Caco-2 (cell line): ENCODE measurements at regions of chr19 and their contacts with region 1.

Region 1: DNA sequence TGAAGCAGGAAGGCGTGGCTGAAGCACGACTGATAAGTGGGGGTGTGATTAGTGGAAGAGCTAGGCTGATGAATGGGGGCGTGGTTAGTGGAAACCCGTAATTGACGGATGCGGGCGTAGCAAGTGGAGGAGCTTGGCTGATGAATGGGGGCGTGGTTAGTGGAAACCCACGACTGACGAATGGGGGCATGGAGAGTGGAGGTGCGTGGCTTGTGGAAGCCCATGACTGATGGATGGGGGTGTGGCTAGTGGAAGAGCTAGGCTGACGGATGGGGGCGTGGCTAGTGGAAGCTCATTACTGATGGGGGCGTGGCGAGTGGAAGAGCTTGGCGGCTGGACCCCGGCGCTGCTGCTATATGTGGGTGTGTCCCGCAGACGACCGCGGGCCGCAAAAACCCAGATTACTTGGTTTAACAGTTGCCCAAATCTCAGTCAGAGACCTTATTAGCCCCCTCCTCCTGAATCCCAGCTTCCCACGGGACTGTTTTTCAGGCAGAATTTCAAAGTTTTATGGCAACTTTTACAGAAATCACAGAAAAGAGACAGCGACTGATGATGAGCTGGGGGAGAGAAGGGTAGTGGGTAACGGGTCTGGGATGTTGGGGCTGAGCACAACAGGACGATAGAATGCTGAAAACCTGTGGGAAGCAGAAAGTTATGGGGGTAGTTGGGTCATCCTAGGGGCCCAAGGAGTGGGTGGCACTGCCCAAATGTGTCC is 9.0 kb upstream of the MEIS3 start:
- DNase-seq: peak; percentile 92 to 98
- H3K4me3 ChIP-seq: peak overlapping the region; percentile 13; the same call in 1 of the 2 replicates
- H3K4me3 Mint-ChIP-seq: no peak overlapping the region
- H3K27ac Mint-ChIP-seq: no peak overlapping the region
- H3K4me1 ChIP-seq: peaks cover 13% of the 10 kb centered on the region
- H3K4me1 Mint-ChIP-seq: no peaks in the 10 kb centered on the region
- H3K27me3 ChIP-seq: peaks cover 3% of the 10 kb centered on the region
- H3K27me3 Mint-ChIP-seq: peaks cover 4% of the 10 kb centered on the region
- CTCF ChIP-seq: no peak

Region 2: GRCh38 chr19:47284324-47284899 is 143.9 kb before region 1 on chr19:
- CTCF ChIA-PET with region 1: interaction called, 5 read pairs
- POLR2A ChIA-PET with region 1: no interaction called
- intact Hi-C with region 1: loop called (anchors 5 kb)
- DNase-seq: peak in 1 of 2 experiments; percentile 78
- H3K4me3 ChIP-seq: no peak overlapping the region
- H3K4me3 Mint-ChIP-seq: no peak overlapping the region
- H3K27ac Mint-ChIP-seq: no peak overlapping the region
- H3K4me1 ChIP-seq: peaks cover 10% of the 10 kb centered on the region
- H3K4me1 Mint-ChIP-seq: peaks cover 14% of the 10 kb centered on the region
- H3K27me3 ChIP-seq: no peaks in the 10 kb centered on the region
- H3K27me3 Mint-ChIP-seq: no peaks in the 10 kb centered on the region
- CTCF ChIP-seq: peak; percentile 66 to 83

Region 3: DNA sequence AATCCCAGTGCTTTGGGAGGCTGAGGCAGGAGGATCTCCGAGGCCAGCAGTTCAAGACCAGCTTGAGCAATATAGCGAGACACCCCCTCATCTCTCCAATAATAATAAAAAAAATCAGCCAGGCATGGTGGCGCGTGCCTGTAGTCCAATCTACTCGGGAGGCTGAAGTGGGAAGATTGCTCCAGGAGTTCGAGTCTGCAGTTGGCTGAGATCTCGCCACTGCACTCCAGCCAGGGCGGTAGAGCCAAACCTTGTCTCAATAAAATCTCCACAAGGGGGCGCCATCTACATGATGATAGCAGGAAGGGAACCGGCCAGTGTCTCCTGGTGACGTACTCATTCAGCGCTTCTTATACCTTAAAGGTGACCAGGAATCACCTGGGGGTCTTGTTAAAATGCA is 132.3 kb before region 1 on chr19:
- CTCF ChIA-PET with region 1: interaction called, 5 read pairs
- POLR2A ChIA-PET with region 1: no interaction called
- intact Hi-C with region 1: loop called (anchors 1 kb)
- DNase-seq: peak; percentile 89 to 92
- H3K4me3 ChIP-seq: no peak overlapping the region
- H3K4me3 Mint-ChIP-seq: no peak overlapping the region
- H3K27ac Mint-ChIP-seq: peak overlapping the region; percentile 64
- H3K4me1 ChIP-seq: no peaks in the 10 kb centered on the region
- H3K4me1 Mint-ChIP-seq: peaks cover 7% of the 10 kb centered on the region
- H3K27me3 ChIP-seq: no peaks in the 10 kb centered on the region
- H3K27me3 Mint-ChIP-seq: no peaks in the 10 kb centered on the region
- CTCF ChIP-seq: peak; percentile 78 to 89

Region 4: GRCh38 chr19:47391510-47392223 is 36.7 kb before region 1 on chr19:
- CTCF ChIA-PET with region 1: interaction called, 10 read pairs
- POLR2A ChIA-PET with region 1: no interaction called
- intact Hi-C with region 1: loop called (anchors 2 kb)
- DNase-seq: peak; percentile 71 to 84
- H3K4me3 ChIP-seq: no peak overlapping the region
- H3K4me3 Mint-ChIP-seq: peak overlapping the region; percentile 34
- H3K27ac Mint-ChIP-seq: no peak overlapping the region
- H3K4me1 ChIP-seq: no peaks in the 10 kb centered on the region
- H3K4me1 Mint-ChIP-seq: no peaks in the 10 kb centered on the region
- H3K27me3 ChIP-seq: no peaks in the 10 kb centered on the region
- H3K27me3 Mint-ChIP-seq: peaks cover 6% of the 10 kb centered on the region
- CTCF ChIP-seq: peak; percentile 89 to 92

Region 5: DNA sequence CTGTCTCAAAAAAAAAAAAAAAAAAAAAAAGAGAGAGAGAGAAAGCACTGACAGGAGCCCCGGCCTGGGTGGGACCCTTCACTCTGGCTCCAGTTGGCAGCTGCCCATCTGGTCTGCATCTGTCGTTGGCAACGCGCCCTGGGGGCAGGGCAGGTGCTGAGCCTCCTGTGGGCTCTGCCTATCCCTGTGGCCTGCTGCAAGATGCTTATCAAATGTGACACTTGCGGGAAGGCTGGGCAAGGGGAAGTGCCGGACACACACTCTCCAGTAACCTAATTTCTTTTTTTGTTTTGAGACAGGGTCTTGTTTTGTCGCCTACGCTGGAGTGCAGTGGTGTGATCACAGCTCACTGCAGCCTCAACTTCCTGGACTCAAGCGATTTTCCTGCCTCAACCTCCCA is 66.4 kb after region 1 on chr19:
- CTCF ChIA-PET with region 1: no interaction called
- POLR2A ChIA-PET with region 1: no interaction called
- intact Hi-C with region 1: no loop called
- DNase-seq: no peak
- H3K4me3 ChIP-seq: no peak overlapping the region
- H3K4me3 Mint-ChIP-seq: no peak overlapping the region
- H3K27ac Mint-ChIP-seq: no peak overlapping the region
- H3K4me1 ChIP-seq: peaks cover 6% of the 10 kb centered on the region; the same call in 1 of the 2 replicates
- H3K4me1 Mint-ChIP-seq: no peaks in the 10 kb centered on the region
- H3K27me3 ChIP-seq: no peaks in the 10 kb centered on the region
- H3K27me3 Mint-ChIP-seq: no peaks in the 10 kb centered on the region
- CTCF ChIP-seq: no peak

Region 6: DNA sequence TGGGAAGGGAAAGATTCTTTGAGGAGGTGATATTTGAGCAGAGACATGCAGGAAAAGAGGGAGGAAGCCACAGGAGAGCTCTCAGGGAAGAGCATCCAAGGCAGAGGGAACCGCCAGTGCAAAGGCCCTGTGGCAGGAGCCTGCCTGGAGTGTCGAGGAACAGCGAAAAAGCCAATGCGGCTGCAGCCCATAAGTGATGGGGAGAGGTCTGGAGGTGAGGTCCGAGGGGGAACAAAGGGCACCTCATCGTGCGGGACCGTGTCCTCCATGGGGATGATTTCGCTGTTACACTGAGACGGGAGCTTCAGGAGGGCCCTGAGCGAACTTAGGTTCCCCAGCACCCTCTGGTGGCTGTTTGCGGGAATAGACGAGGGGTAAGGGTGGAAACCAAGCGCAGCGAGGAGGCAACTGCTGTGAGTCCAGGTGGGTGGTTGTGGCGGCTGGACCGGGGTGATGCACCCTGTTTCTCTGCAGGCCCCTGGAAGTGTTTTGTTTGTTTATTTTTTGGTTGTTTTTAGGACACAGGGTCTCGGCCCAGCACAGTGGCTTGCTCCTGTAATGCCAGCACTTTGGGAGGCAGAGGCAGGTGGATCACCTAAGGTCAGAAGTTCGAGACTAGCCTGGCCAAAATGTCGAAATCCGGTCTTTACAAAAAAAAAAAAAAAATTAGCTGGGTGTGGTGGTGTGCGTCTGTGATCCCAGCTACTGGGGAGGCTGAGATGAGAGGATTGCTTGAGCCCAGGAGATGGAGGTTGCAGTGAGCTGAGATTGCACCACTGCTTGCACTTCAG is 279.0 kb after region 1 on chr19:
- CTCF ChIA-PET with region 1: interaction called, 15 read pairs
- POLR2A ChIA-PET with region 1: no interaction called
- intact Hi-C with region 1: no loop called
- DNase-seq: peak; percentile 84 to 87
- H3K4me3 ChIP-seq: no peak overlapping the region
- H3K4me3 Mint-ChIP-seq: no peak overlapping the region
- H3K27ac Mint-ChIP-seq: peak overlapping the region; percentile 11
- H3K4me1 ChIP-seq: 0 out of 2 replicates have a peak, but pooled peaks cover 4% of the 10 kb centered on the region
- H3K4me1 Mint-ChIP-seq: peaks cover 10% of the 10 kb centered on the region
- H3K27me3 ChIP-seq: no peaks in the 10 kb centered on the region
- H3K27me3 Mint-ChIP-seq: no peaks in the 10 kb centered on the region
- CTCF ChIP-seq: peak; percentile 85 to 91